ENCODE measurements at regions of chr19 and their contacts with region 1.

Region 1: GRCh38 chr19:4457654-4458395 is at the start of gene UBXN6:
- DNase-seq: peak; percentile 98
- H3K4me3 ChIP-seq: peak within 1 kb of the TSS; percentile 67 to 87 (median 74)
- H3K27ac ChIP-seq: peak within 1 kb of the TSS; percentile 88 to 95 (median 91)
- H3K4me1 ChIP-seq: peaks cover 22 to 47% (median 36%) of the 10 kb centered on the region in 4 donors
- H3K27me3 ChIP-seq: no peaks in the 10 kb centered on the region
- CTCF ChIP-seq: peak in 1 of 3 experiments; percentile 18
- EP300 ChIP-seq: no peak
- POLR2A ChIP-seq: no peak
- total RNA-seq, gene UBXN6: 65.2 to 190 (median 98.8) TPM

Region 2: DNA sequence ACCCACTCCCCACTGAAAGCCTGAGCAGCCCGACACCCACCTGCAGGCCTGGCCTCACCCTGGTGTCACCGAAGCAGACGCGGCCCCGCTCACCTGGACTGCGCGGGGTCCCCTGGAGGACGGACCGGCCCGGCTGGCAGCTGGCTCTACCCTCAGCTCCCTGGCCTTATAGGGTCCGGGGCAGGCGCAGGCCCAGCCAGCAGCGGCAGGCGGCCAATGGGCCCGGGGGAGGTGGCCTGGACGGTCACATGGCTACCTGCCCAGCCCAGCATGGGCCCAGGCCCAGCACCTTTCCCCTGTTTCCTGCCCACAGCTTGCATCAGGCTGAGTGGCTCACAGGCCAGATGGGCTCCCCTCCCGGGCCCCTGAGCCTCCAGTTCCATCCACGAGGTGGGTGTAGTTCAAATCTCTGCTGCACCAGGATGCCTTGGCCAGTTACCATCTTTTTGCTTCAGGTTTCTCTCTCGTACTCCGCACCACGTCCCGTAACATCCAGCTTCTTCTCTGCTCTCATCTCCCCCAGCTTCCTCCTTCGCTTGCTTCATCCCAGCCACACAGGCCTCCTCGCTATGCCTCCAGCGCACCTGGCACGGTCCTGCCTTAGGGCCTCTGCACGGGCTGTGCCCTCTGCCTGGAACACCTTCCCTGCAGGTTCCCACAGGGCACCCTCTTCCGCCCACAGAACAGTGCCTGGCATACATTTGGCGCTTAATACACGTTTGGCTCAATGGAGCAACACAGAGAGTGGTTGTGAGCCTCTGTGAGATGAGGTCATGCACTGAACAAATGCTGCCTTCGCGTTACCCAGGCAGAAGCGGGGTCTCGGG is 60.7 kb after region 1 on chr19 and contains the start of gene PLIN4:
- intact Hi-C with region 1: loop called (anchors 5 kb)
- DNase-seq: no peak
- H3K4me3 ChIP-seq: peak within 1 kb of the TSS; percentile 58 to 69 (median 64)
- H3K27ac ChIP-seq: peak within 1 kb of the TSS; percentile 93 to 96 (median 94)
- H3K4me1 ChIP-seq: peaks cover 27 to 54% (median 49%) of the 10 kb centered on the region in 4 donors
- H3K27me3 ChIP-seq: no peaks in the 10 kb centered on the region
- CTCF ChIP-seq: no peak
- EP300 ChIP-seq: no peak
- POLR2A ChIP-seq: peak; percentile 86
- total RNA-seq, gene PLIN4: 45.7 to 134 (median 91.1) TPM

Measured in esophagus muscularis mucosa (tissue), 4 donors.